CD8-positive, alpha-beta T cell (primary cell): ENCODE measurements at regions of chr10 and their contacts with region 1.

Region 1: DNA sequence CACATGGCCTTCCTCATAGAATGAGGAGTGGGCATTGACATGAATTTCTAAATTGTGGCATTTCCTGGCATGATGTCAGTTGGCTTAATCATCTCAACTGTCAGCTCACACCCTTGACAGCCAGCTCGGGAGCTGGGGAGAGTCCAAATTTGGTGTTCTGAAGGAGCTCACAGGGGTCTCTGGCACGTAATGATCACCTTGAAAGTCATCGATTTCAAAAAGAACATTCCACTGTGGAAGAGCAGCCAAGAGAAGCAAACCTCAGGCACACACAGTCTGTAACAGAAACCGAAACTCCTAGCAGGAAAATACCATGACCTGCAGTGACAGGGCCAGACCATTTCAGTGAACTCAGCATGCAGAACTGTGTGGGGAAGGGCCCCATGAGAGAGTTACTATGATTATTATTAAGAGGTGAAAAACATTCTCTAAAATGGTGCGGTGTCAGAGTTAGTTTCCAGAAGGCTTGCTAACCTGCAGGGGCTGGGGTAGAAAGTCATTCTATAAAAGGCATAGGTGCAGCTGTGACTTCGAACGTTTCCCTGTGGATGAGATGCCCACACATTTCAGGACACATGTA is 26.4 kb upstream of the KLF6 start:
- DNase-seq: peak in 4 of 9 experiments; percentile 27 to 78 (median 50)
- ATAC-seq: peak; percentile 34
- H3K4me3 ChIP-seq: peak overlapping the region in 1 of 2 experiments; percentile 15
- H3K4me3 Mint-ChIP-seq: peak overlapping the region; percentile 68
- H3K27ac ChIP-seq: peak overlapping the region; percentile 75 to 98
- H3K27ac Mint-ChIP-seq: peak overlapping the region; percentile 90
- H3K4me1 ChIP-seq: peaks cover 56% of the 10 kb centered on the region
- H3K4me1 Mint-ChIP-seq: peaks cover 62% of the 10 kb centered on the region
- H3K27me3 ChIP-seq: no peaks in the 10 kb centered on the region
- H3K27me3 Mint-ChIP-seq: no peaks in the 10 kb centered on the region
- CTCF ChIP-seq: no peak

Region 2: GRCh38 chr10:3828404-3829155 is 17.2 kb after region 1 on chr10:
- CTCF ChIA-PET with region 1: interaction called, 8 read pairs
- POLR2A ChIA-PET with region 1: interaction called, 11 read pairs
- intact Hi-C with region 1: loop called in 1 of 2 experiments (anchors 1 kb)
- DNase-seq: peak in 2 of 9 experiments; percentile 62 to 78
- ATAC-seq: peak; percentile 46
- H3K4me3 ChIP-seq: peak overlapping the region; percentile 28 to 53
- H3K4me3 Mint-ChIP-seq: peak overlapping the region; percentile 81
- H3K27ac ChIP-seq: peak overlapping the region; percentile 50 to 88
- H3K27ac Mint-ChIP-seq: peak overlapping the region; percentile 92
- H3K4me1 ChIP-seq: peaks cover 12% of the 10 kb centered on the region
- H3K4me1 Mint-ChIP-seq: peaks cover 22% of the 10 kb centered on the region
- H3K27me3 ChIP-seq: no peaks in the 10 kb centered on the region
- H3K27me3 Mint-ChIP-seq: no peaks in the 10 kb centered on the region
- CTCF ChIP-seq: no peak